ENCODE measurements at regions of chr4 and their contacts with region 1.

Region 1: GRCh38 chr4:56575820-56576429 is 70.3 kb downstream of the ARL9 start:
- DNase-seq: no peak
- H3K4me3 ChIP-seq: no peak overlapping the region
- H3K27ac ChIP-seq: no peak overlapping the region
- H3K4me1 ChIP-seq: no peaks in the 10 kb centered on the region
- H3K27me3 ChIP-seq: no peaks in the 10 kb centered on the region
- CTCF ChIP-seq: peak in 3 of 4 experiments; percentile 43 to 66 (median 62)
- POLR2A ChIP-seq: no peak

Region 2: GRCh38 chr4:55269995-55270394 is 1305.9 kb before region 1 on chr4:
- intact Hi-C with region 1: no loop called
- DNase-seq: no peak
- H3K4me3 ChIP-seq: no peak overlapping the region
- H3K27ac ChIP-seq: no peak overlapping the region
- H3K4me1 ChIP-seq: no peaks in the 10 kb centered on the region
- H3K27me3 ChIP-seq: no peaks in the 10 kb centered on the region
- CTCF ChIP-seq: no peak
- POLR2A ChIP-seq: no peak

Region 3: GRCh38 chr4:56626963-56627362 is 51.0 kb after region 1 on chr4:
- intact Hi-C with region 1: loop called (anchors 10 kb)
- DNase-seq: no peak
- H3K4me3 ChIP-seq: no peak overlapping the region
- H3K27ac ChIP-seq: no peak overlapping the region
- H3K4me1 ChIP-seq: no peaks in the 10 kb centered on the region
- H3K27me3 ChIP-seq: no peaks in the 10 kb centered on the region
- CTCF ChIP-seq: no peak
- POLR2A ChIP-seq: no peak

Region 4: GRCh38 chr4:56655209-56655626 is 79.3 kb after region 1 on chr4:
- intact Hi-C with region 1: loop called (anchors 5 kb)
- DNase-seq: no peak
- H3K4me3 ChIP-seq: peak overlapping the region; percentile 39 to 47
- H3K27ac ChIP-seq: peak overlapping the region; percentile 65 to 66
- H3K4me1 ChIP-seq: peaks cover 8% of the 10 kb centered on the region
- H3K27me3 ChIP-seq: no peaks in the 10 kb centered on the region
- CTCF ChIP-seq: no peak
- POLR2A ChIP-seq: no peak

Region 5: GRCh38 chr4:56799824-56800756 is 224.2 kb after region 1 on chr4:
- intact Hi-C with region 1: loop called (anchors 1 kb)
- DNase-seq: peak; percentile 84
- H3K4me3 ChIP-seq: peak overlapping the region; percentile 32 to 53
- H3K27ac ChIP-seq: peak overlapping the region; percentile 57 to 71
- H3K4me1 ChIP-seq: no peaks in the 10 kb centered on the region
- H3K27me3 ChIP-seq: no peaks in the 10 kb centered on the region
- CTCF ChIP-seq: peak in 3 of 4 experiments; percentile 87 to 93 (median 89)
- POLR2A ChIP-seq: no peak

Region 6: GRCh38 chr4:56828784-56829535 is 253.0 kb after region 1 on chr4:
- intact Hi-C with region 1: loop called (anchors 10 kb)
- DNase-seq: no peak
- H3K4me3 ChIP-seq: no peak overlapping the region
- H3K27ac ChIP-seq: no peak overlapping the region
- H3K4me1 ChIP-seq: no peaks in the 10 kb centered on the region
- H3K27me3 ChIP-seq: no peaks in the 10 kb centered on the region
- CTCF ChIP-seq: no peak
- POLR2A ChIP-seq: no peak